Right ventricle myocardium superior (tissue), 1 donor: ENCODE measurements at regions of chr15 and their contacts with region 1.

Region 1: GRCh38 chr15:69058830-69059556 is 44.5 kb downstream of the NOX5 start:
- DNase-seq: peak; percentile 93
- ATAC-seq: peak; percentile 92

Region 2: GRCh38 chr15:68829068-68829467 is 229.9 kb before region 1 on chr15:
- intact Hi-C with region 1: no loop called
- DNase-seq: no peak
- ATAC-seq: peak; percentile 78

Region 3: DNA sequence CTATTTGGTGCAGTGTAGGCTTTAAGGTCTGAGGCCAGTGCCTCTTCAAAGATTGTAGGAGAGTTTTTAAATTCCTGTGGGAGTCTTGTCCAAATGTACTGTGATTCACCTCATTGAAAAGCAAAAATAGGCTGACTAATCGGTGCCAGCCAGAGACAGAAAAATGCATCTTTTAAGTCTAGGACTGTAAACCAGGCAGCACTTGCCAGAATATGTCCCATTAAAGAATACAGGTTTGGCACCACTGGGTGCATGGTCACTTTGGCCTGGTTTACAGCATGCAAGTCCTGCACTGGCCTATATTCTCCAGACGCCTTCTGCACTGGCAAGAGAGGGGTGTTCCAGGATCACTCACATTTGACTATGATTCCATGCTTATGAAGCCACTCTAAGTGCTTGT is 64.8 kb before region 1 on chr15:
- intact Hi-C with region 1: no loop called
- DNase-seq: no peak
- ATAC-seq: no peak

Region 4: DNA sequence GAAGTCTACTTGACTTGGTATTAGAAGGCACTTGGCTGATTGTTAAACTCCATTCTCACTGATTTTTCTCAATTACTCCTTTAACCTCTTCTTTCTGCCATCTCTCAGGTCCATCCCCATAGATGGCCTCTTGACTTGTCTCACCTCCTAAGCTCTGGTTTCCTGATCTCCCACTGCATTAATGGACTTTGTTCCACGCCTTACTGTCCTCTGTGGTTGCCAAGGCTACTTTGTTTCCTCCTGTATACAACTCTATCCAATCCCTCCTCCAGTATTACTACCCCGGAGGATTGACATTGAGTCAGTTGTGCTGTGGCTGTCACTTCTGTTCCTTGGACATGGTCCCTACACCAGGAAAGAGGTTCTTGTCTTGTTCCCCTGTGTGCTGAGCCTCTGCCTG is 90.8 kb after region 1 on chr15:
- intact Hi-C with region 1: no loop called
- DNase-seq: no peak
- ATAC-seq: no peak

Region 5: GRCh38 chr15:69160141-69160993 is 101.4 kb after region 1 on chr15 and contains the start of gene GLCE:
- intact Hi-C with region 1: loop called (anchors 10 kb)
- DNase-seq: peak; percentile 97
- ATAC-seq: peak; percentile 99
- total RNA-seq, gene GLCE: 7.6 TPM

Region 6: DNA sequence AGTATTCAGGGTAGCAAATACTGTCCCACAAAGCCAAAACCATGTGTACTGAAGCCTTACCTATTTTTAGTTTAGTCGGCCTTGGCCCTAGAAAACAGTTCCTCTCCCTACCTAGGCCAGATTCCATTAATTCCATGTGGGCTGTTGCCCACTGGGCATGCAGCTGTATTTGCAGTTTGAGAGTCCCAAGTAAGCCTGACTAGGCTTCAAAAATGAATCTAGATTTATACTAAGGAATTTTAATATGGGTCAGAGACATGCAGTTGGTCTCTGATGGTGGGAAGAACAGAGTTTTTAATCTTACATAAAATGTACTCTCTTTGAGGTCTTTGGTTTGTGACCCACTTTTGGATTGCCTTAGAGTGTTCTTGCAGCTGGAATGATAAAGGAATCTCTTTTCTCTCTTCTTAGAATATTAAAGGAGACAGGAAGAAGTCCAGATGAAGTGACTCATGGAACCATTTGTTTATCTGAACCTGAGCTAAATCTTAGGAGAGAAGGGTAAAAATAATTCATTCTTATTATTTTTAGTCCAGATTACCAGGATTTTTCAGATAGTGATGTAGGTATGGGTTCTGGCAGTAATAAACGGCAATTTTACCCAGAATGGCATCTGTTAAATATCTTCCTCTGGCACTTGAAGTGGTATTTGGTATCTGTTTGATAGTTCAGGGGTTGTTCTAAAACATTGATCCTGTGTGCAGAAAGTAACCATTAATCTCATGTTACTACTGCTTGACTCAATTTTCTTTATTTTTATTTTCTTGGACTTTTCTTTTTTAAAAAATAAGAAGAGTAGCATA is 135.2 kb after region 1 on chr15:
- intact Hi-C with region 1: no loop called
- DNase-seq: no peak
- ATAC-seq: peak; percentile 58

Region 7: DNA sequence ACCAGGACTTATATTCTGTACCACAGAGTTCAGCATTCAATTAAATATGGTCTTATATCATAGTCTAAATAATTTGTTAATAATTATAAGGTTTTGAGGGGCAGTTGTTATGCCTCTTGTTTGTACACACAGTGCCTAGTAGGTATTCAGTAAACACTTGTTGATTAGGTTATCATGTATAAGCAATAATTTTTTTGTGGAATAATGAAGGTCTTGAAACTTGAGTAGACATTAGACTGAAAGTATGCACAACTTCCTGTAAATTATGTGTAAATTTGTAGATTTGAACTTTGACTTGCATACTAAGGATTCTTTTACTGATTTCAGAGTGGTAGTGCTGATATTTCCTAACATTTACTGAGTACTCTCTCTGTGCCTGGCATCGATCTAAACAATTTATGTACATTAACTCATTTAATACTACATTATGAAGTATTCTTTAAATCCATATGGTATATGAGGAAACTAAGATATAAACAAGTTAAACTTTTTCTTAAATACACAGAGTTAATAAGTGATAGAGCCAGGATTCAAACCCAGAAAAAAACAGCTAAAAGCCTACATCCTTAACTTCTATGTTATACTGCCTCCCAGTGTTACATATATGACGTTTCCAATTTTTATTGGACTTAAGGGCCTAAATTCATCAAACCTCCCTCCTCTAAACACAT is 166.5 kb after region 1 on chr15:
- intact Hi-C with region 1: loop called (anchors 2 kb)
- DNase-seq: no peak
- ATAC-seq: no peak

Region 8: DNA sequence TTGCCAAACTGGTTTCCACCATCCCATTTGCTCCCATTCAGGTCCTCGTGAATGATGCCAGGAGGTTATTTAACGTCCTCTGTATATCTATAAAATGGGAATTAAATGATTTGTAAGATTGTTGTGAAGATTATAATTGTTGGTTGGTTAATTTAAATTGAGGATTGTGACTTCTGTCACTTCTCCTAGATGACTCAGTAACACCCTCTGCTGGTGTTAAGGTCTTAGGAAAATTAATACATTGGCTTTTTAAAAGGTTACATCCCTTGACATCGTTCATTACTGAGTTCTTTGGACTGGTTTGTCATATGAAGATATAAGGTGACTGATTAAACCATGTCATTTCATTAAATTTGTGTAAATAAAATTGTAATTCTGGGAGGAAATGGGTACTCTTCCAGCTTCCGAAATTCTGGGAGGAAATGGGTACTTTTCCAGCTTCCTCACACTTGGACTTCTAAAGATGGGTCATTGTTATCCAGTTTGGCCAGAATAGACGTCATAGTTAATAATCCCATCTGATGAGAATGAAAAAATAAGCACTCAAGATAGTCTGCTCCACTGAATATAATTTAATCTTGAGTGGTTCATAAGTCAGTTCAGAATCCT is 206.5 kb after region 1 on chr15:
- intact Hi-C with region 1: loop called (anchors 2 kb)
- DNase-seq: no peak
- ATAC-seq: no peak

Region 9: GRCh38 chr15:69394556-69395282 is 335.7 kb after region 1 on chr15:
- intact Hi-C with region 1: loop called (anchors 2 kb)
- DNase-seq: peak; percentile 90
- ATAC-seq: peak; percentile 92